ENCODE measurements at regions of chr16 and their contacts with region 1.

Region 1: DNA sequence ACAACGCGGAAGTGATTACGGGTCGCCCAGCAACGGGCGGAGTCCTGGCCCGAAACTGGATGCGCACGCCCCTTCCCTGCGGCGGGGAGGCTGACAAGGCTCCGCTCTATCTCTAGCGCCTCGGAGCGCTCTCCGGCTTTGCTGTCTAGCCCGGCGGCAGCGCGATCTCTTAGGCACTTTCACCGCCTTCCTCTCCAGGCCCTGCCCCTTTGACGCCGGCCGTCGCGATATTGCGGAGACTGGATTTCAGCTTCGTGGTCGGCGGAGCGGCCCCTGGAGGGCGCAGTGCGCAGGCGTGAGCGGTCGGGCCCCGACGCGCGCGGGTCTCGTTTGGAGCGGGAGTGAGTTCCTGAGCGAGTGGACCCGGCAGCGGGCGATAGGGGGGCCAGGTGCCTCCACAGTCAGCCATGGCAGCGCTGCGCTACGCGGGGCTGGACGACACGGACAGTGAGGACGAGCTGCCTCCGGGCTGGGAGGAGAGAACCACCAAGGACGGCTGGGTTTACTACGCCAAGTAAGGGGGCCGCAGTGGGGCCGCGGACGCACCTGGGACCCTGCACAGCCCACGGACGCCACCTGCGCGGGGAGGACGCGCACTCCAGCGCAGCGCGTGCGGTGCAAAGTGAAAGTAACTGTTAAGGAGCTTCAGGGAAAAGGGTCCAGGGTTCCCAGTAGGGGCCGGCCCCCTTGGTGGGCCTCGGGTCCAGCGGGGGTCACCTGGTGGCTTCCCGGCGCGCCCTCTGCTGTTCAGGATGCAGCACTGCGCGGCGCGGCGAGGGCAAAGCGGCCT is at the start of gene WWOX:
- DNase-seq: peak; percentile 95
- H3K4me3 Mint-ChIP-seq: peak within 1 kb of the TSS; percentile 90
- H3K27ac Mint-ChIP-seq: peak within 1 kb of the TSS; percentile 85
- H3K4me1 Mint-ChIP-seq: peaks cover 24% of the 10 kb centered on the region
- H3K27me3 Mint-ChIP-seq: peaks cover 6% of the 10 kb centered on the region
- total RNA-seq, gene WWOX: 16.0 and 17.8 TPM in 2 replicates

Region 2: DNA sequence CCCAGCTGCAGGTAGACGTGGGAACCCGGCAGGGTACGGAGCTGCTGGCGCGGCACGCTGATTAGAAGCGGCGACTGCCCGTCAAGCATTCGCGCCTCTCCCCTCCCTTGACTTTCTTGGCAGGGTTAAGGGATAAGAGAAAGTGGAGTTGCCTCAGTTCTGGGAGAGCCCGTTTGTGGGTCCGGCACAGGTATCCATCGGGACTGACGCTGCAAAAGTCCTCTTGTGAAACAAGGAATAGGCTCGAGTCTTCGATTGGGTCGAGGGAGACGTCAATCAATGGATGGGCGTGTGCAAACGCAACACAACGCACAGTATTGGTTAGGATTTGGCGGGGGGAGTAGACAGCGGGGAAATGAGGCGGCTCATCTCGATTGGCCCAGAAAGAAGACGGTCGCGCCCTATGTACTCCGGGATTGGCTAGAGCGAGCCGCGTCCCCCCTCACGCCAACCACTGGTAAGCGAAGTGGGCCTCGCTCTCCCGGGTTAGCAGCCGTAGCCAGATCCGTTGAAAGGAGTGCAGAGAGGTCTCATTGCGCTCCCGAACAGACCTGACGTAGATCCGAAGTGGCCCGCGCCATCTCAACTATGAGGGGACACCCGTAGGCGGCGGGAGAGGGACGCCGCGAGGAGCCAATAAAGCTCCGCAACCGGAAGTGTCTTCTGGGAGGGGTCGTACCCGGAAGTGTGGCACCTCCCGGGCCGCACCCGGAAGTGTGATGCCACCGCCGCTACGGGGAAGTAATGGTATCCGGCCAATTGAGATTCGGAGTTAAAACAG is 908.9 kb before region 1 on chr16 and contains the start of gene MON1B:
- intact Hi-C with region 1: loop called (anchors 1 kb)
- DNase-seq: peak; percentile 93
- H3K4me3 Mint-ChIP-seq: peak within 1 kb of the TSS; percentile 97
- H3K27ac Mint-ChIP-seq: peak within 1 kb of the TSS; percentile 100
- H3K4me1 Mint-ChIP-seq: peaks cover 39% of the 10 kb centered on the region
- H3K27me3 Mint-ChIP-seq: peaks cover 4% of the 10 kb centered on the region
- total RNA-seq, gene MON1B: 66.2 and 70.1 TPM in 2 replicates

Region 3: GRCh38 chr16:77211880-77212740 is 887.5 kb before region 1 on chr16:
- intact Hi-C with region 1: loop called (anchors 1 kb)
- DNase-seq: peak; percentile 68
- H3K4me3 Mint-ChIP-seq: peak overlapping the region; percentile 81
- H3K27ac Mint-ChIP-seq: peak overlapping the region; percentile 90
- H3K4me1 Mint-ChIP-seq: peaks cover 8% of the 10 kb centered on the region
- H3K27me3 Mint-ChIP-seq: peaks cover 2% of the 10 kb centered on the region

Region 4: GRCh38 chr16:77675464-77676324 is 423.9 kb before region 1 on chr16:
- intact Hi-C with region 1: loop called (anchors 1 kb)
- DNase-seq: peak; percentile 36
- H3K4me3 Mint-ChIP-seq: no peak overlapping the region
- H3K27ac Mint-ChIP-seq: no peak overlapping the region
- H3K4me1 Mint-ChIP-seq: no peaks in the 10 kb centered on the region
- H3K27me3 Mint-ChIP-seq: peaks cover 7% of the 10 kb centered on the region

Region 5: GRCh38 chr16:77722309-77723107 is 377.1 kb before region 1 on chr16 and contains the start of gene NUDT7:
- intact Hi-C with region 1: loop called (anchors 1 kb)
- DNase-seq: peak; percentile 91
- H3K4me3 Mint-ChIP-seq: peak within 1 kb of the TSS; percentile 84
- H3K27ac Mint-ChIP-seq: peak within 1 kb of the TSS; percentile 77
- H3K4me1 Mint-ChIP-seq: peaks cover 13% of the 10 kb centered on the region
- H3K27me3 Mint-ChIP-seq: no peaks in the 10 kb centered on the region
- total RNA-seq, gene NUDT7: 4.3 and 5.6 TPM in 2 replicates

Region 6: GRCh38 chr16:78002915-78003538 is 96.5 kb before region 1 on chr16:
- intact Hi-C with region 1: loop called (anchors 1 kb)
- DNase-seq: peak; percentile 55
- H3K4me3 Mint-ChIP-seq: no peak overlapping the region
- H3K27ac Mint-ChIP-seq: no peak overlapping the region
- H3K4me1 Mint-ChIP-seq: peaks cover 5% of the 10 kb centered on the region
- H3K27me3 Mint-ChIP-seq: peaks cover 2% of the 10 kb centered on the region

Region 7: DNA sequence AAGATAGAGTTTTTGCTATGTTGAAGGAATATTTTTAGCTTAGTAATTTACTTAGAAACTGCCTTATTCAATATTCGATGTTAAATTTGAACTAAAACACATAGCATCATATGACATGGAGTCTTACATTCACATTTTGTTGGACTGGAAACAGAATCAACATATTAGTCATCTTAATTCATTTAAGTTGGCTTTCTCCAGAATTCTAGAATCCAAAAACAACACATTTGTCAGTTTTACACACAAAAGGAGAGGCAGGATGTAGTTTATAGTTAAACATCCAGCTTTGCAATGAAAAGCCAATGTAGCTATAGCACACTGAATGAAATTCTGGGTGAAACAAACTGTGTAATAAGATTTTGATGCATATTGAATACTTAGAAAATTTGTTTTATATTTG is 43.2 kb after region 1 on chr16:
- intact Hi-C with region 1: no loop called
- DNase-seq: no peak
- H3K4me3 Mint-ChIP-seq: no peak overlapping the region
- H3K27ac Mint-ChIP-seq: no peak overlapping the region
- H3K4me1 Mint-ChIP-seq: no peaks in the 10 kb centered on the region
- H3K27me3 Mint-ChIP-seq: no peaks in the 10 kb centered on the region

Region 8: GRCh38 chr16:79918916-79919315 is 1819.3 kb after region 1 on chr16:
- intact Hi-C with region 1: no loop called
- DNase-seq: no peak
- H3K4me3 Mint-ChIP-seq: no peak overlapping the region
- H3K27ac Mint-ChIP-seq: no peak overlapping the region
- H3K4me1 Mint-ChIP-seq: peaks cover 18% of the 10 kb centered on the region
- H3K27me3 Mint-ChIP-seq: peaks cover 3% of the 10 kb centered on the region